Heart left ventricle (tissue), 16 donors: ENCODE measurements at regions of chr18 and their contacts with region 1.

Region 1: DNA sequence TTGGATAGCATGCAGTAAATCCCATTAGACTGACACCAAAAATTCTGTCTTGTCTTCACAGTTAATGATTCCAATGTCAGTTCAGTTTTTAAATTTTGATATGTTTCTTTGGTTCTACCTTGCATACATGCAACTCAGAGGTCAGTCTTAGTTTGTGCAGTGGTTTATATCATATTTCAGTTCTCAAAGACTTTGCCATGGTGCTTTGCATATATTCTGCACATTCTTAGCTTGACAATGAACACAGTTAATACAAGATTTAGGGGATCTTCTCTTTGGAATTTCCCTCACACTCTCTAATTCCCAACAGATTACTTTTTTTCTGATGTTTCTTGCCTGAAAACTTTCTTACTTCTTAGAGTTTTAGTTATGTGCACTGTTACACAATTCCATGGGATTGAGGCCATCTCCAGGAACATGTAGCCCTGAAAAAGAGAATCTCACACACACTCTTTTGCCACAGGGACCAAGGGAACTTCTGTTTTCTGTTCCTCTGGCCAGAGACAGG is 17.3 kb downstream of the NOL4 start:
- DNase-seq: no peak
- ATAC-seq: no peak
- H3K4me3 ChIP-seq: no peak overlapping the region
- H3K27ac ChIP-seq: no peak overlapping the region
- H3K4me1 ChIP-seq: no peaks in the 10 kb centered on the region
- H3K27me3 ChIP-seq: peaks cover 0 to 3% (median 0%) of the 10 kb centered on the region in 9 donors
- CTCF ChIP-seq: no peak
- POLR2A ChIP-seq: no peak

Region 2: DNA sequence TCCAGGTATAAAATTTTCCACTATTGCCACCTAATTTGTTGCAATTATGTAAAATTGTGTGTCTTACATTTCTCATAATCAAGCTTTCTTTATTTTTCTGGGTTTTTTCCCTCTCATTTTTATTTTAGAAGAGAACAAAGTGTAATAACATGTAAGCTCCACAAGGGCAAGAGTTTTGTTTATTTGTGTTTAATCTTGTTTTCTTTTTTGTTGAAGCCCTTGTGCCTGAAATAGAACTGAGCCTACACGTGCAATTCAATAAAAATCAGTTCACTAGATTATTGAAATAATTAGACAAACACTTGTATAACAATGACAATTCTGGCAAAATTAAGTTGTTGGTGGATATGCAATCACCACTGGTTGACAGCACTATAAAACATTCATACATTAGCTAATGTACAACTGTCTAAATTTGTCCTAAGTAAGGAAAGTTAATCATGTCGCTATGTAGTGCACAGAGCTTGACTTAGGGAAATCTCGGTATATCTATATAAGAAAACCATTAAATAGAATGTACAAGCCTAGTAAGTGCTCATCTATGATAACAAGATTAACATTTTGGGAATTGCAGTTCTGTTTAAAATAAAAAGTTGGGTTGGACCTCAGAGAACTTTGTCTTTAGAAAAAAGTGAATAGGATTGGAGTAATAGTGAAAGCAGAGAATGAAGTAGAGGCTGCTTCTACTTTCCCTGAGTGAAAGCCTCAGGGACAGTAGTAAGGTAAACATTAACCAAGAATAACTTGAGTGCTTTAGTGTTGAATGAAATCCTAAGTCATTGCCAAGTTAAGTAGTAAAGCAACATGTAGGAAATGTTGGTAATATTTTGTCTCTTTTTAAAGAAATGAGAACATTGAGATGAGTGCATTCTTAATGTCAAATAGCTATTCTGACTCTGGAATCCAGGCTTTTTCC is 54.7 kb after region 1 on chr18:
- intact Hi-C with region 1: loop called in 1 of 10 experiments (anchors 10 kb)
- DNase-seq: no peak
- ATAC-seq: no peak
- H3K4me3 ChIP-seq: no peak overlapping the region
- H3K27ac ChIP-seq: no peak overlapping the region
- H3K4me1 ChIP-seq: no peaks in the 10 kb centered on the region
- H3K27me3 ChIP-seq: no peaks in the 10 kb centered on the region
- CTCF ChIP-seq: peak in 1 of 12 donors; percentile 27
- POLR2A ChIP-seq: no peak

Region 3: DNA sequence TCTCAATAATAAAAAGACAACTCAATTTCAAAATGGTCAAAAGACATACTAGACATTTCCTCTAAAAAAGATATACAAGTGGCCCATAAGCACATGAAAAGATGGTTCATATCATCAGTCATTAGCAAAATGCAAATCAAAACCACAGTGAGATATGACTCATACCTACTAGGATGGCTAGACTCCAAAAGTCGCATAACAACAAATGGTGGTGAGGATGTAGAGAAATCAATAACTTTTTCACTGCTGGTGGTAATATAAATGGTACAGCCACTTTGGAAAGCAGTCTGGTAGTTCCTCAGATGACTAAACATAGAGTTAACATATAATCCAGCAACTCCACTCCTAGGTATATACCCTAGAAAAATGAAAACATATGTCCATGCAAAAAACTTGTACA is 259.7 kb after region 1 on chr18:
- intact Hi-C with region 1: loop called in 1 of 10 experiments (anchors 10 kb)
- DNase-seq: no peak
- ATAC-seq: no peak
- H3K4me3 ChIP-seq: no peak overlapping the region
- H3K27ac ChIP-seq: no peak overlapping the region
- H3K4me1 ChIP-seq: no peaks in the 10 kb centered on the region
- H3K27me3 ChIP-seq: no peaks in the 10 kb centered on the region
- CTCF ChIP-seq: no peak
- POLR2A ChIP-seq: no peak